ENCODE measurements at regions of chr2 and their contacts with region 1.

Region 1: GRCh38 chr2:219388127-219388844 is 574 bp upstream of the DNPEP start:
- DNase-seq: peak; percentile 87
- ATAC-seq: peak; percentile 74
- H3K4me3 ChIP-seq: peak overlapping the region; percentile 53 to 70 (median 68)
- H3K27ac ChIP-seq: peak overlapping the region; percentile 68
- H3K4me1 ChIP-seq: peaks cover 30% of the 10 kb centered on the region
- H3K27me3 ChIP-seq: no peaks in the 10 kb centered on the region; a peak in 1 of 5 replicates
- CTCF ChIP-seq: peak; percentile 78
- EP300 ChIP-seq: peak in 1 of 2 experiments; percentile 12; a peak in 1 of 4 replicates
- POLR2A ChIP-seq: peak; percentile 52 to 68; a peak in 3 of 4 replicates
- RAD21 ChIP-seq: peak; percentile 67; the same call in 1 of the 2 replicates

Region 2: GRCh38 chr2:219331560-219332213 is 56.6 kb before region 1 on chr2:
- CTCF ChIA-PET with region 1: no interaction called
- POLR2A ChIA-PET with region 1: no interaction called
- in situ Hi-C with region 1: no loop called
- intact Hi-C with region 1: no loop called
- DNase-seq: no peak
- ATAC-seq: peak; percentile 84
- H3K4me3 ChIP-seq: no peak overlapping the region
- H3K27ac ChIP-seq: no peak overlapping the region
- H3K4me1 ChIP-seq: no peaks in the 10 kb centered on the region
- H3K27me3 ChIP-seq: peaks cover 3 to 36% of the 10 kb centered on the region in 2 experiments; a peak in 4 of 5 replicates
- CTCF ChIP-seq: no peak
- EP300 ChIP-seq: no peak
- POLR2A ChIP-seq: no peak
- RAD21 ChIP-seq: no peak

Region 3: DNA sequence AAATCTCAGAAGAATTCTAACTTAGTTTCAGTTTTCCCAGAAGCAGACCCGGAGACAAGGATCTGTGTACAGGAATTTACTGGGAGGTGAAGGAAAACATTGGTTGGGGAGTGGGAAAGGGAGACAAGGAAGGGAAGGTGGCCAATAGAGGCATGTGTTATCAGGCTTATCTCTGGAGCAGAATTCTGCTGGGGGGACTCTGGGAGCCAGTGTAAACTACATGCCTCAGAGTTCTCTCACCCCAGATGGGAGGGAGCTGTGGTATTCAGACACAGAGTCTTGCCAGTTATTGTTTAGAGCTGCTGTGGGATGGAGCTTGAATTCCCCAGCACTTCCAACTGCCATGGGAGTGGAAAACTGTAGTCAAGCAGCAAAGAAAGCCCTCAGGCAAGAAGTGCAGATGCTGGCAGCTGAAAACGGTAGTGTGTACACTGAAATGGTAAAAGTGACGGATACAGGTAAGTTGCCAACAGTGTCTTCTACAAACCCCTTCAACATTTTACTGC is 19.5 kb before region 1 on chr2:
- CTCF ChIA-PET with region 1: no interaction called
- POLR2A ChIA-PET with region 1: interaction called, 17 read pairs
- in situ Hi-C with region 1: no loop called
- intact Hi-C with region 1: no loop called
- DNase-seq: no peak
- ATAC-seq: peak; percentile 49
- H3K4me3 ChIP-seq: no peak overlapping the region
- H3K27ac ChIP-seq: no peak overlapping the region
- H3K4me1 ChIP-seq: peaks cover 14% of the 10 kb centered on the region; the same call in 1 of the 2 replicates
- H3K27me3 ChIP-seq: no peaks in the 10 kb centered on the region
- CTCF ChIP-seq: no peak
- EP300 ChIP-seq: no peak
- POLR2A ChIP-seq: no peak
- RAD21 ChIP-seq: no peak

Region 4: GRCh38 chr2:219402665-219403515 is 14.6 kb after region 1 on chr2:
- CTCF ChIA-PET with region 1: no interaction called
- POLR2A ChIA-PET with region 1: interaction called, 16 read pairs
- in situ Hi-C with region 1: no loop called
- intact Hi-C with region 1: no loop called
- DNase-seq: peak; percentile 67
- ATAC-seq: peak; percentile 78
- H3K4me3 ChIP-seq: no peak overlapping the region
- H3K27ac ChIP-seq: no peak overlapping the region
- H3K4me1 ChIP-seq: peaks cover 42% of the 10 kb centered on the region
- H3K27me3 ChIP-seq: peaks cover 2 to 31% of the 10 kb centered on the region in 2 experiments; a peak in 4 of 5 replicates
- CTCF ChIP-seq: peak; percentile 88
- EP300 ChIP-seq: no peak
- POLR2A ChIP-seq: no peak
- RAD21 ChIP-seq: peak; percentile 70